CD8-positive, alpha-beta memory T cell (primary cell): ENCODE measurements at regions of chr7 and their contacts with region 1.

Region 1: DNA sequence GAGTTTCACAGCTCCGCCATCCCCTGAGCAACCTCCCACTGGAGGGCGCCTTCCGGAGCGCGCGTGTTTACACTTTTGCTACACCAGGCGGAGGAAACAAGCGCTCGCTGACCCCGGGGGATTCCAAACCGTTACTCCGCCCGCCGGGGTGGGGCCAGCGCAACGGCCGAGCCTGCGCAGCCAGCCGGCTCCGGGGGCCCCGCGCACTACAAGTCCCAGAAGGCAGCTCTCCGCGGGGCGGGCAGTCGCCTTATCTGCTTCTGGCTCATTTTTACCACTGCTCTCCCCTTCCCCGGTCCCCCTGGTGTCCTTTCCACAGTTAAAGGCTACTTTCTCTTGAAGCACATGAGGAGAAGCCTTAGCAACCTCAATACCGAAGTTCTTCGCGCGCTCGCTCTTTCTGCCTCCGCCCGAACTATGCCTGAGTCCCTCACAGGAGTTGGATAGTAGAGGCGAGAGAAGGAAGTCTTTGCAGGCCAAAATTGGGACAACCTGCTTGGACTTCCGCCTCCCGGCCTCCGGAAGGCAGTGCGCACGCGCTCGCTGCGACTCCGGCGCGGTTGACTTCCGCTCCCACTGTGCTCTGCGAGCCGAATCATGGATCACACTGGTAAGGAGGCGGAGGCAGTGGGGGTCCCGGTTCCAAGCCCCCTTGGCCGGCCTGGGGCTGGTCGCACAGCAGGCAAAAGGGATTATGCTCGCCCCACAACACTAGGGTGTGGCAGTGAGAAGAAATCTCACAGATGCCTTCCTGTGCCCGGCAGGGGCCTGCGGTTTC is at the start of gene CBLL1:
- DNase-seq: peak; percentile 96 to 98 (median 97)
- H3K4me3 ChIP-seq: peak within 1 kb of the TSS; percentile 97
- H3K4me3 Mint-ChIP-seq: peak within 1 kb of the TSS; percentile 93 to 99 (median 97)
- H3K27ac ChIP-seq: peak within 1 kb of the TSS; percentile 98
- H3K27ac Mint-ChIP-seq: peak within 1 kb of the TSS; percentile 94 to 100 (median 100)
- H3K4me1 ChIP-seq: peaks cover 47% of the 10 kb centered on the region
- H3K4me1 Mint-ChIP-seq: peaks cover 50 to 59% (median 55%) of the 10 kb centered on the region in 3 donors
- H3K27me3 ChIP-seq: no peaks in the 10 kb centered on the region
- H3K27me3 Mint-ChIP-seq: no peaks in the 10 kb centered on the region
- total RNA-seq, gene CBLL1: 42.7 to 49.3 TPM

Region 2: DNA sequence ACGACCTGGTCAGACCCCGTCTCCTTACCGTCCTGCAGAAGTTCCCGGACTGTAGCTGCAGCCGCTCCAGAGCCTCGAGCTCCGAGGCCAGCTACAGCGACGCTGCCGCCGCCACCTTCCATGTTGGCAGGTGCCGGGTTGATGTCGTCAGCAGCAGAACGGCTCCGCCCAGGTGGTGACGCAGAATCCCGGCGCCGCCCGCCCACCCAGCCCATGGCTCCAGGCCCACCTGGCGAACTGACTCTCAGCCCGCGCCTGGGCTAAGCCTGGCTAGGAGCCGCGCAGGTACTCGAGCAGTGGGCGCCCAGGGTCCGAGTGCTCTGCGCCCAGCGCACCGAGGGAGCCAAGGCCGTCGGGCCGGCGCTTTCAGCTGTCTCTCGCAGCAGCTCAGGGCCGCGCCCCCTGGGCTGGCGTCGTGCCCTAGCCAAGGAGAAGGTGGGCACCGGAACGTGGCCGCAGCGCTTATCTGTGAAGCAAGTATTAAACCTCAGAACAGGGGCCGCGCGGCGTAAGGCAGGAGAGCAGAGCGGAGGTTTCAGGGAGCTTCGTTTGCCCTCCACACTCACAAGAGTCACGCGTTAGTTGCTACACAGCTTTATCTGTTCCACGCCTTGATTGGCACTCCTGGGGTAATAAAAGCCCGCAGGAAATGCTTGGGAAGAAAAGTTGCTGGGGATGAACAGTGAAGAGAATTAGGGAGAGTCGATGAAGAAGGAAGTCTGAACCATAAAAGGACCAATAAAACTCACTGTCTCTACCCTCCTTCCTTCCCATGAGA is 179.8 kb before region 1 on chr7 and contains the starts of genes COG5 and DUS4L:
- CTCF ChIA-PET with region 1: interaction called, 4 read pairs
- POLR2A ChIA-PET with region 1: interaction called, 11 read pairs
- DNase-seq: peak; percentile 79 to 88 (median 82)
- H3K4me3 ChIP-seq: peak within 1 kb of the TSS; percentile 77
- H3K4me3 Mint-ChIP-seq: peak within 1 kb of the TSS; percentile 78 to 96 (median 86)
- H3K27ac ChIP-seq: peak within 1 kb of the TSS; percentile 92
- H3K27ac Mint-ChIP-seq: peak within 1 kb of the TSS; percentile 91 to 98 (median 94)
- H3K4me1 ChIP-seq: peaks cover 49% of the 10 kb centered on the region
- H3K4me1 Mint-ChIP-seq: peaks cover 54 to 66% (median 62%) of the 10 kb centered on the region in 3 donors
- H3K27me3 ChIP-seq: no peaks in the 10 kb centered on the region
- H3K27me3 Mint-ChIP-seq: no peaks in the 10 kb centered on the region
- total RNA-seq, gene COG5: 29.2 to 38.9 TPM
- total RNA-seq, gene DUS4L: 11.6 TPM

Region 3: DNA sequence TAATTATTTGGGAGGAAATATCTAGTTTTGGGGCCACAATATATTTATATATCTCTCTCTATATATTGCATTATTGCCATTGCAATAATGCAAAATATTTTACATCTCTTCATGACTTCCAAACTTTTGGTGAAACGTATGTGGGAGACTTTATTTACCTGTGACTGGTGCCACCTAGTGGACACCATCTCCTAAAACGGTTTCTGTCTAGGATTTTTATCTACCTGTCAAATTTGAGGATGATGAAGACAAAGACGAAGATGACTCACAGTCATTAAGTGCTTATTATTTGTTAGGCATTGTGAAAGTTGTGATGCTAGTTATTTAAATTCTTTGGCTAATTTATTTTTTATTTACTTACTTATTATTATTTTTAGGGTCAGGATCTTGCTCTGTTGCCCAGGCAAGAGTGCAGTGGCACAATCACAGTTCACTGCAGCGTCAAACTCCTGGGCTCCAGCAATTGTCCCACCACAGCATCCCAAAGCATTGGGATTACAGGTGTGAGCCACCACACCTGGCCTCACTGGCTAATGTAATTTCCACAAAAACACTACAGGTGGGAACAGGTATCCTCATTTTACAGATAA is 18.5 kb before region 1 on chr7:
- CTCF ChIA-PET with region 1: interaction called, 33 read pairs
- POLR2A ChIA-PET with region 1: no interaction called
- DNase-seq: peak; percentile 19 to 51 (median 33)
- H3K4me3 ChIP-seq: no peak overlapping the region
- H3K4me3 Mint-ChIP-seq: no peak overlapping the region
- H3K27ac ChIP-seq: no peak overlapping the region
- H3K27ac Mint-ChIP-seq: no peak overlapping the region
- H3K4me1 ChIP-seq: no peaks in the 10 kb centered on the region
- H3K4me1 Mint-ChIP-seq: no peaks in the 10 kb centered on the region
- H3K27me3 ChIP-seq: no peaks in the 10 kb centered on the region
- H3K27me3 Mint-ChIP-seq: peaks cover 5 to 28% of the 10 kb centered on the region in 2 donors

Region 4: GRCh38 chr7:107856806-107857540 is 113.2 kb after region 1 on chr7:
- CTCF ChIA-PET with region 1: interaction called, 10 read pairs
- POLR2A ChIA-PET with region 1: interaction called, 10 read pairs
- DNase-seq: peak in 3 of 5 donors; percentile 21 to 50 (median 44)
- H3K4me3 ChIP-seq: peak overlapping the region; percentile 4
- H3K4me3 Mint-ChIP-seq: peak overlapping the region in 6 of 7 donors; percentile 55 to 76 (median 69)
- H3K27ac ChIP-seq: peak overlapping the region; percentile 16
- H3K27ac Mint-ChIP-seq: peak overlapping the region; percentile 82 to 97 (median 88)
- H3K4me1 ChIP-seq: peaks cover 23% of the 10 kb centered on the region
- H3K4me1 Mint-ChIP-seq: peaks cover 50 to 80% (median 79%) of the 10 kb centered on the region in 3 donors
- H3K27me3 ChIP-seq: no peaks in the 10 kb centered on the region
- H3K27me3 Mint-ChIP-seq: no peaks in the 10 kb centered on the region

Region 5: DNA sequence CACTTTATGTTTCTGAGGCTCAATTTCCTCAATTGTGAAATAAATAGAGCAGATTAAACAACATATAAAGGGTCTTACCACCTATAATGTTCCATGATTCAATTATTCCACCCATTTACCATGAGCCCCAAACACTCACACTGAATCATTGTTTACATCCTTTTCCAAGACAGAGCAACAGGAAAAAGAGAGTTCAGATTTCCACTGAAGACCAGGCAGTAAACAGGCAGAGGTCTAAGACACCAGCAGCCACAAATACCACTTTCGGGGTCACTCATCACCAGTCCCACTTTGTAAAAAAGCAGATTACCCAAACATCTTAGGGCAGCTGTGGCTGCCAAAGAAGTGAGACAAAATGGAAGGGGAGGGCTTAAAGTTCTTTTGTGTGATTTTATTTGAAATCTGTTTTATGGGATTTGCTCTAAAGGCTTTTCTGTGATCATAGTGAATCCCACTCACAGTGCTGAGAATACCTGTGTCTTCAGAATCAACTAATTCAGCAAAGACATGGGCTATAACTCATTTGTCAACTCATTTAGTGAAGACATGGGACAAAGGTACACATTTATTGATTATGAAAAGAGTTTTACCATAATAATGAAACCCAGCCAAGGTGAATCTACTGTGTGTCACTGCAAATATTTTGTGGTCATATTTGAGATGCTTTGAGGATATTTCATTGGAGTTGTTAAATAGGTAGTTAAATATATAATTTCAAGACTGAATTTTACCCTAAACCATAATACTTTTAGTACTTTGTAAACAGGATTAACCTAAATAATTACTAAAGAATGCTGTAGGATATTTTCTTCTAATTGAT is 122.4 kb after region 1 on chr7:
- CTCF ChIA-PET with region 1: interaction called, 227 read pairs
- POLR2A ChIA-PET with region 1: interaction called, 3 read pairs
- DNase-seq: no peak
- H3K4me3 ChIP-seq: no peak overlapping the region
- H3K4me3 Mint-ChIP-seq: peak overlapping the region in 5 of 7 donors; percentile 9 to 58 (median 27)
- H3K27ac ChIP-seq: no peak overlapping the region
- H3K27ac Mint-ChIP-seq: peak overlapping the region in 6 of 8 donors; percentile 65 to 90 (median 76)
- H3K4me1 ChIP-seq: peaks cover 4% of the 10 kb centered on the region
- H3K4me1 Mint-ChIP-seq: peaks cover 27 to 51% (median 40%) of the 10 kb centered on the region in 3 donors
- H3K27me3 ChIP-seq: no peaks in the 10 kb centered on the region
- H3K27me3 Mint-ChIP-seq: no peaks in the 10 kb centered on the region

Region 6: GRCh38 chr7:107890962-107891635 is 147.3 kb after region 1 on chr7 and contains the start of gene DLD:
- CTCF ChIA-PET with region 1: interaction called, 38 read pairs
- POLR2A ChIA-PET with region 1: interaction called, 13 read pairs
- DNase-seq: peak; percentile 90 to 95 (median 92)
- H3K4me3 ChIP-seq: peak within 1 kb of the TSS; percentile 86
- H3K4me3 Mint-ChIP-seq: peak within 1 kb of the TSS; percentile 91 to 100 (median 98)
- H3K27ac ChIP-seq: peak within 1 kb of the TSS; percentile 93
- H3K27ac Mint-ChIP-seq: peak within 1 kb of the TSS; percentile 90 to 100 (median 99)
- H3K4me1 ChIP-seq: peaks cover 40% of the 10 kb centered on the region
- H3K4me1 Mint-ChIP-seq: peaks cover 48 to 57% (median 54%) of the 10 kb centered on the region in 3 donors
- H3K27me3 ChIP-seq: no peaks in the 10 kb centered on the region
- H3K27me3 Mint-ChIP-seq: peaks cover 0 to 4% of the 10 kb centered on the region in 2 donors
- total RNA-seq, gene DLD: 121 TPM